Cardiac septum (tissue), 1 donor: ENCODE measurements at regions of chr12 and their contacts with region 1.

Region 1: DNA sequence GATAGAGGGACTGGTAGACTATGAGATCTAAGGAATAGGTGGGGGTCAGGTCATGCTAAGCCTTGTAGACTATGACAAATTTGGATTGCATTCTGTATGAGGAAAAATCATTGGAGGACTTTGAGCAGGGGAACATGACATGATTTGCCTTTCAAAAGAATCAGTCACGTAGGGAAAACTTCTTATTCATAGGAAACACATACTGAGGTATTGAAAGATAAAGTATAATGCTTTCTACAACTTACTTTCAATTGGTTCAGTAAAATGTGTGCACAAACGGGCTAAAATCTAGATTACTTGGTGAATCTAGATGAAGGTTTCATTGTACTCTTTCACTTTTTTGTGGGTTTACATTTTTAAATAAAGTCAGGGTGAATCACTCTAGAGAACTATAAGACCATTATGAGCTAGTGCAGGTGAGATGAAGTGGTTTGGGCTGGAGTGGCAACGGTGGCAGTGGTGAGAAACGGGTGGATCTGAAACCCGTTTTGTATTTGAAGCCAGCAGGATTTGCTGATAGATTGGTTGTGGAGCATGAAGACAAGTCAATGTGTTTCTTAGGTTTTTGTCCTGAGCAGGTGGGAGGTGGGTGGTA is 6.7 kb downstream of the BBS10 start:
- DNase-seq: no peak

Region 2: GRCh38 chr12:76266797-76267196 is 74.7 kb before region 1 on chr12:
- intact Hi-C with region 1: loop called (anchors 5 kb)
- DNase-seq: no peak

Region 3: DNA sequence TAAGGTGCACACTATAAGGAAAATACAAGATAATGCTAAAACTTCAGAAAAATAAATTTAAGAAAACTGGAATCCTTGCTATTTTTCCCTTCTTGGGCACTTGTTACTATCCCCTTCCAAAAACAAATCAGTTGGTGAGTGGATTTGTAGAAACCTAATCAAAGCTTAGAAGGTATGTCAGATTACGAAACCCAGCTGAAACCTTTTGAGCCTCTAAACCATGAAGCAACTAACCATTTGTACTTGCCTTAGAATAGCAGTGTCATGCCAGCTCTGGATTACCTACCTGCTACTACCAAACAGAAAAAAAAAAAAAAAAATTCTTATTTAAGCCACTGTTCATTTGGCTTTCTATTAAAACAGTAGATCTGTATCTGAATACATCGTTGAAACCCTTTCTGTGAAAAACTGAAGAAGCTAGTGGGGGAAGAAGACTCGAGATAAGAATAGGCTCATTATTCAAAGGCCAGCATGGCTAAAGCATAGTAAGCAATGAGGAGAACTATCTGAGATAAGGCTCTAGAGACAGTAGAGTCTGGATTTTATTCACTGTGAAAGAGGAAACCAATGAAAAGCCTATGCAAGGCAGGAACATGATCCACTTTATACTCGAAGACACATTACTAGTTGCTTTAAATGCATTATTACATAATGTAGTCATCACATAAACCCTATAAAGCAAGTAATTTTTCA is 187.8 kb after region 1 on chr12:
- intact Hi-C with region 1: no loop called
- DNase-seq: no peak

Region 4: DNA sequence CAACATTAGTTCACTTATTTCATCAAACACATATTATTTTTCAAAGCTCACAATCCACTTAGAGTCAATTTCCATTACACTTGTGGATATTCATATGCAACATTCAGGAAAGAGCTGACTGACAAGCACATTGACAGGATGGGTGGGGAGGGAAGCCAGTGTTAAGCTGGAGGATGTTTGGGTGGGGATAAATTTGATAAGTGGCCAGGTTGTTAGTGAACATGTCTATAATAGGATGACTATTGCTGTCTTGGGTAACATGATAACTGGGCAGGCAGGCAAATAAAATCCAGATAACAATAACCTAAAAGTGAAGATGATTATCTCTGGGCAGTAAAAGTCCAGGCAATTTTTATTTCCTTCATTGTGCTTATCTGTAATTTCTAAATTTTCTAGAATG is 291.9 kb after region 1 on chr12:
- intact Hi-C with region 1: no loop called
- DNase-seq: no peak